OCI-LY7 (cell line): ENCODE measurements at regions of chr17 and their contacts with region 1.

Region 1: DNA sequence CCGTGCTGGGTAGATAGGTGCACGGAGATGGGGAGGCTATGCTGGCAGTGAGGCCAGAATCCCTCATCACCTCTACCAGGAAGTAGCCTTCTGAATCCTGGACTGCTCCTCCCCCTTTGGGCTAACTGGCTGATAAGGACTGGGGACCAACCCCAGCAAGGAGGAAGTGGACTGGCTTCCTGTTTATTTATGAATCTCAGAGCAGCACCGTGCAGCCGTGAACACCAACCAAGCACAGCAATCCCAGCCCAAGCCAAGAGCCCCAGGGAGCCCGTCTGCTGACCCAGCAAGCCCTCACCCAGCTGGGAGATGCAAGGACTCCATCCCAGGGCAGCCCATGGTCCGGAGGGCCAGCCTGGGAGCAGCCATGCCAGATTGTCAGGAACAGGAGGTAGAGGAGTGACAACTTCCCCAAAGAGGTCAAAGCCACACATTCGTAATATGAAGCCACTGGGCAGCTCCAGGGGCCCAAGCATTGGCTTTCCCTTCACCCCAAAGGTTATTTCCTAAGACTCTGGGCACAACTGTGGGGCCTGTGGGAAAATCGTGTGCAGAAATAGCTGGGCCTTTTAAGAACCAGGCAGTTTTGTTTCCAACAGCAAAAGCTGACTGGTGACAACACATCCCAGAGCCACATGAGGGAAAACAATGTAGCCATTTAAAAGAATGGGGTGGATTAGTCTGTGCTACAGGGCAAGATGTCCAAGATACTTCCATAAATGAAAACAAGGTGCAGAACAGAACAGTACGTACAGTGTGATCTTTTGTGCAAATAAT is 23.9 kb downstream of the PHB1 start:
- DNase-seq: peak; percentile 80
- H3K4me3 ChIP-seq: peak overlapping the region; percentile 55
- H3K27ac ChIP-seq: peak overlapping the region; percentile 79
- H3K4me1 ChIP-seq: peaks cover 56% of the 10 kb centered on the region
- CTCF ChIP-seq: no peak

Region 2: DNA sequence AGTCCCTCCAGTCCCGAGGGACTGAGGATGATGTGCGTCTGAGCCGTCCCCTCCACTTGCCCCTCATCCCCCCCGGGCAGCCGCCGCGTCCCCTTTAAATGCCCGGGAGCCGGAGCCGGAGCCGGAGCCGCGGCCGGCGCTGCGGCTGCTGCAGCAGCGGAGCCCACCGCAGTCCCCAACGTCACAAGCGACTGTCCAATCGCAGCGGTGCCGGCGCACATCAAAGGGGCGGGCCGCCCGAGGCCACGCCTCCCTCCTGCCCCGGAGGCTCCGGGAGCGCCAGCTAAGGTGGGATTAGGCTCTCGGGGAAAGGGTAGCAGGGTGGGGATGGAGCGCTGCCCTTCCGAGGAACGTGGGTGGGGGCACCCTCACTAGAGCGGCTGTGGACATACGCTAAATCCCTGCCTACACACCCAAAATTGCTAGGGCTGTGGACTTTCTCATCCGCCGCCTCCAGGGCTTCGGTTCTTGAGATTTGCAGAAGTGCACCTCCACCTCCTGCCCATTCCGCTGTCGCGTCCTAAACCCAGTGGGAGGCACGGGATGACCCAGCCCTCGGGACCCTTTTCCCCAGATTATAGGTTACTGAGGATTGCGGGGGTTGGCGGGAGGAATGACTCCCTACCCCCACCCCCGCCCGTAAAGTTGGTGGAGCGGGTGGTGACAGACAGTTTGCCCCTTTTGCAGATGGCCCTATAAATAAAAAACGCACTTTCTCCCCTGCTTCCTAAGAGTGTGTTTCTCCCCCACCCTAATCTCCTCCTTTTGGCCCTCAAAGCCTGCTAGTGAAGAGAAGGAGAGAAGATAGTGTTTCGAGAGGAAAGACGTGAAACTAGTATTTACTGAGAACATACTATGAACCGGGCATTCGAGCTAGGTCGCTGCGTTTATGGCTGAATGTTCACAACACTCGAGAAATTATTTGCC is 159.8 kb before region 1 on chr17 and contains the start of gene PHOSPHO1:
- CTCF ChIA-PET with region 1: no interaction called
- POLR2A ChIA-PET with region 1: no interaction called
- intact Hi-C with region 1: loop called (anchors 5 kb)
- DNase-seq: peak; percentile 90
- H3K4me3 ChIP-seq: peak within 1 kb of the TSS; percentile 67
- H3K27ac ChIP-seq: no peak within 1 kb of the TSS
- H3K4me1 ChIP-seq: peaks cover 9% of the 10 kb centered on the region
- CTCF ChIP-seq: no peak
- total RNA-seq, gene PHOSPHO1: not detected in 2 replicates

Region 3: GRCh38 chr17:49315551-49316257 is 75.0 kb before region 1 on chr17:
- CTCF ChIA-PET with region 1: interaction called, 6 read pairs
- POLR2A ChIA-PET with region 1: interaction called, 15 read pairs
- intact Hi-C with region 1: loop called (anchors 1 kb)
- DNase-seq: peak; percentile 84
- H3K4me3 ChIP-seq: peak overlapping the region; percentile 58
- H3K27ac ChIP-seq: peak overlapping the region; percentile 55
- H3K4me1 ChIP-seq: peaks cover 28% of the 10 kb centered on the region
- CTCF ChIP-seq: peak; percentile 98

Region 4: DNA sequence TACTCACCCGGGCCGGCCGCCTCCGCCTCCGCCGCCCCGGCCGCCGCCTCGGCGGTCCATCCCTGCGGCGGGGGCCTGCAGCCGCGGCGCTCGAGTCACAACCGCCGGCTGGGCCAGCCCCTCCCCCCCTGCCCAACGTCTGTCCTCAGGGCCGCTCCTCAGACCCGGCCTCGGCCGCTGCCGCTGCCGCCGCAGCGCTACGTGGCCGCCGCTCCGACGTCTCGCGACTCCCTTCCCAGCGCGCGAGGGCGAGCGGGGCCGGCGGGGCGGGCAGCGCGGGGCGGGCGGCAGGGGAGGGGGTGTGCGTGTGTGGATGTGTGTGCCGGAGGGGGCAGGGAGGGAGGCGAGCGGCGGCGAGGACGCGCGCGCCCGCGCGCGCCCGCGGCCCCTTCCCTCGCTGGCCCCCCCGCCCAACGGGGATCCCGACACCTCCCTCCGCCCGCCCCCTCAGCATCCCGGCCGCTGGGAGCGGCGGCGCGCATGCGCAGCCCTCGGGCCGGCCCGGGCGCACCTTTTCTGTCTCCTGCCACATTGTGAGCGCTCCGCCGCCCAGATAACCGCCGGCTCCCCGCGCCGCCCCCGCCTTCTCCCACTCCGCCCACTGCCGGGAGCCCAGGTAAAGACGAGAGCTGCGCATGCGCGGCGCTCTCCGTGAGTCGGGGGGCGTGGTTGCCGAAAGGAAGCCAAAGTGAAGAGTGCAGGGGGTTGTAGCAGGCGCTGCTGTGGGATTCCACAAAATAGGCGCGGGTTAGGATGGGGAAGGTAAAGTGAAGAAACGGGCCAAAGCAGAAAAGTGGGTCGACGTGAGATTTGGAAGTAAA is 28.6 kb before region 1 on chr17 and contains the start of gene ZNF652:
- CTCF ChIA-PET with region 1: interaction called, 6 read pairs
- POLR2A ChIA-PET with region 1: interaction called, 11 read pairs
- intact Hi-C with region 1: loop called (anchors 1 kb)
- DNase-seq: peak; percentile 98
- H3K4me3 ChIP-seq: peak within 1 kb of the TSS; percentile 89
- H3K27ac ChIP-seq: peak within 1 kb of the TSS; percentile 88
- H3K4me1 ChIP-seq: peaks cover 44% of the 10 kb centered on the region
- CTCF ChIP-seq: no peak
- total RNA-seq, gene ZNF652: 35.4 and 36.8 TPM in 2 replicates